Heart left ventricle (tissue), 16 donors: ENCODE measurements at regions of chr1 and their contacts with region 1.

Region 1: GRCh38 chr1:168623003-168623828 is 46.8 kb downstream of the XCL1 start:
- DNase-seq: peak in 1 of 5 donors; percentile 70
- ATAC-seq: peak in 3 of 4 donors; percentile 64 to 94 (median 89)
- H3K4me3 ChIP-seq: no peak overlapping the region
- H3K27ac ChIP-seq: peak overlapping the region in 7 of 12 donors; percentile 0 to 55 (median 18)
- H3K4me1 ChIP-seq: peaks cover 0 to 28% (median 11%) of the 10 kb centered on the region in 12 donors
- H3K27me3 ChIP-seq: no peaks in the 10 kb centered on the region
- CTCF ChIP-seq: peak in 1 of 12 donors; percentile 21
- POLR2A ChIP-seq: no peak

Region 2: GRCh38 chr1:168567007-168567406 is 56.2 kb before region 1 on chr1:
- intact Hi-C with region 1: loop called in 1 of 10 experiments (anchors 10 kb)
- DNase-seq: no peak
- ATAC-seq: no peak
- H3K4me3 ChIP-seq: no peak overlapping the region
- H3K27ac ChIP-seq: no peak overlapping the region
- H3K4me1 ChIP-seq: no peaks in the 10 kb centered on the region
- H3K27me3 ChIP-seq: no peaks in the 10 kb centered on the region
- CTCF ChIP-seq: no peak
- POLR2A ChIP-seq: no peak